ENCODE measurements at regions of chr18 and their contacts with region 1.

Region 1: GRCh38 chr18:2606335-2606734 is 35.0 kb downstream of the NDC80 start:
- DNase-seq: no peak
- ATAC-seq: no peak
- H3K4me3 ChIP-seq: no peak overlapping the region
- H3K27ac ChIP-seq: peak overlapping the region; percentile 46; the same call in 1 of the 2 replicates
- H3K4me1 ChIP-seq: no peaks in the 10 kb centered on the region
- H3K27me3 ChIP-seq: no peaks in the 10 kb centered on the region
- CTCF ChIP-seq: no peak
- EP300 ChIP-seq: no peak
- POLR2A ChIP-seq: no peak
- RAD21 ChIP-seq: no peak

Region 2: DNA sequence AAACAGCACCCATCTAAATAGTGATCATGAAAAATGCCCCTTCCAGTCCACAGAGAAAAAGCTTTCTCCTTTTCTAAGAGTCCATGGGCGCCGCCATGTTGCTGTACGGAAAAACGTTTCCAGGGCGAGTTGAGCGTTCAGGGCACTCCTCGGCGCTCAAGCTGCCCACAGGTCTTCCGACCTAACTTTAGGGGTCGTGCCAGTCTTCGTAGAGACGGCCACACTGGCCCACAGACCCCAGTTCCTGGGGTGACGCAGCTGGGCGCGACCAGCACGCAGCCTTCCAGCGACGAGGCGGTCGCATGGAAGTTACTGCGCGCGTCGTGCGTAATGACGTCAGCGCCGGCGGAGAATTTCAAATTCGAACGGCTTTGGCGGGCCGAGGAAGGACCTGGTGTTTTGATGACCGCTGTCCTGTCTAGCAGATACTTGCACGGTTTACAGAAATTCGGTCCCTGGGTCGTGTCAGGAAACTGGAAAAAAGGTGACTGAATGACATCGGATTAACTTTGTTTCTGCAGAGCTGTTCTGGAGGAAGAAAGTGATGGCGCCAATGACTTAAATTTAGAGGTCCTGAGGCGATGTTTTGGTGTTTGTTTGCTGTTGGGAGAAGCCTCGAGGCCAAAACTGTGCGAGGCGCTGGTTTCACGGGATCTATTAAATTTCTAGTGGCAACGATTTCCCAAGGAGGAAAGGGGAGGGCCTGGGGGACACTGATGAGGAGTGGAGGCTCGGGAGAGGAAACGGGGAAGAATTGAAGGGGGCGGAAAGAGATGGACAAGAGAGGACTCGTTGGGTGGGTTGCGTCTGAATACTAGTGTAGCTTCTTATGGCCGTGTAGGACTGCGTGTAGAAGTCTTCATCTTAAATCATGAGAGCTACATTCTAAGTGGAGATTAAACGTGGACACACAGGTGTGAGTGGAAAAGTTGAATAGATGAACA is 34.9 kb before region 1 on chr18 and contains the starts of genes METTL4 and NDC80:
- CTCF ChIA-PET with region 1: interaction called, 8 read pairs
- POLR2A ChIA-PET with region 1: interaction called, 3 read pairs
- RAD21 ChIA-PET with region 1: interaction called, 21 read pairs
- SMC1A ChIA-PET with region 1: interaction called, 10 read pairs
- in situ Hi-C with region 1: no loop called
- intact Hi-C with region 1: no loop called
- DNase-seq: peak; percentile 71
- ATAC-seq: peak; percentile 82
- H3K4me3 ChIP-seq: peak within 1 kb of the TSS; percentile 82
- H3K27ac ChIP-seq: peak within 1 kb of the TSS; percentile 100
- H3K4me1 ChIP-seq: peaks cover 5% of the 10 kb centered on the region
- H3K27me3 ChIP-seq: no peaks in the 10 kb centered on the region
- CTCF ChIP-seq: 0 out of 6 replicates have a peak, but pooled peaks of 1 of the 3 experiments have one; percentile 12
- EP300 ChIP-seq: no peak
- POLR2A ChIP-seq: peak; percentile 87
- RAD21 ChIP-seq: no peak
- polyA plus RNA-seq, gene METTL4: 7.6 to 13.3 TPM
- polyA plus RNA-seq, gene NDC80: 54.4 to 55.0 TPM

Region 3: DNA sequence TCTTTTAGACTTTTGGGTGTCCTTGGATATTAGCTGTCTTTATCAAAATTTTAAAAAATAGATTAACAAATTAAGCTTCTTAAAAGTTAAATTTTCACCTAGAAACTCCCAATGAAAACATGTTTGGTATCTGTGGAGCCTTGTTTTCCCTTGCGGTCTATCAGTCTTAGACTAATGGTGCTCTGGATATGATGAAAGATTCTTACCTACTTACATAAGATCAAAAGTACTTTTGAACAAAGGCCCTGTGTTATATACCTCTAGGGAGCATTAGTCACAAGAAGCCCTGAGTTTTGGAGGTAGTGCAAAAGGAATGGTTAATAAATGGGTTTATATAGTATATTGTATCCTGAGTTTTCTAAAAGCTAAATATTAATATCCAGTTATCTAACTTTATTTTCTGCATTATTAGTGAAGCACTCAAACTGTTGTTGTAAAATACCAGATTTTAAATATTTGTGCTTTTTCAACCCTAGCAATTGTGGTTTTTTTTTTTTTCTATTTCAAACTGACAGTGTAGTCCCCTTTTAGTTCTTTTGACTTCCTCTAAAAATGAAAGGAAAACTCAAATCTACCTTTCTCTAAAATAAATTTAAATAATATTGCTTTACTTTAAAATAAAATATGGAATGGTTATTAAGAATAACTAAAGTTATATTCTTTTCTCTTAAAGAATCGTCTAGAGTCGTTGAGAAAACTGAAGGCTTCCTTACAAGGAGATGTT is 16.8 kb before region 1 on chr18:
- CTCF ChIA-PET with region 1: no interaction called
- POLR2A ChIA-PET with region 1: interaction called, 3 read pairs
- RAD21 ChIA-PET with region 1: interaction called, 8 read pairs
- SMC1A ChIA-PET with region 1: interaction called, 18 read pairs
- in situ Hi-C with region 1: no loop called
- intact Hi-C with region 1: no loop called
- DNase-seq: no peak
- ATAC-seq: peak; percentile 74
- H3K4me3 ChIP-seq: no peak overlapping the region
- H3K27ac ChIP-seq: peak overlapping the region; percentile 54; the same call in 1 of the 2 replicates
- H3K4me1 ChIP-seq: no peaks in the 10 kb centered on the region
- H3K27me3 ChIP-seq: no peaks in the 10 kb centered on the region
- CTCF ChIP-seq: no peak
- EP300 ChIP-seq: no peak
- POLR2A ChIP-seq: no peak
- RAD21 ChIP-seq: no peak

Region 4: DNA sequence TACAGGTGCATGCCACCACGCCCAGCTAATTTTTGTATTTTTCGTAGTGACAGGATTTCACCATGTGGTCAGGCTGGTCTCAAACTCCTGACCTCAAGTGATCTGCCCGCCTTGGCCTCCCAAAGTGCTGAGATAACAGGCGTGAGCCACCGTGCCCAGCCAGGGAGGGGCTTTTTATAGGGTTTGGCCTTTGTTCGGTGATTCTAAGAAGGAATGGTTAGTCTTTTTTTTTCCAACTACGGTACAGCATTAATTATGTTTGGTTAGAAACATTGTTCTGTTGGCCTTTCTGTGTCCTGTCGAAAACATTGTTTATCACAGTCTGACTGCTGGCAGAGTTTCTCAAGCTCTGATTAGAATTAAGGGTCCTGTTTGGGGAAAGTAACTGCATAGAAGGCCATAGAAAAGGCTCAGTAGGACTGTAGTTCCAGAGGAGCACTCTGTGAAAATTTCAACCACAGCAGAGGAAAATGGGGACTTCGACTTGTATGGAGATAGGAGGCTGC is 29.8 kb after region 1 on chr18:
- CTCF ChIA-PET with region 1: interaction called, 3 read pairs
- POLR2A ChIA-PET with region 1: interaction called, 8 read pairs
- RAD21 ChIA-PET with region 1: interaction called, 30 read pairs
- SMC1A ChIA-PET with region 1: interaction called, 24 read pairs
- in situ Hi-C with region 1: no loop called
- intact Hi-C with region 1: no loop called
- DNase-seq: no peak
- ATAC-seq: peak; percentile 11
- H3K4me3 ChIP-seq: peak overlapping the region; percentile 57; the same call in 1 of the 2 replicates
- H3K27ac ChIP-seq: peak overlapping the region; percentile 99
- H3K4me1 ChIP-seq: peaks cover 40% of the 10 kb centered on the region
- H3K27me3 ChIP-seq: no peaks in the 10 kb centered on the region
- CTCF ChIP-seq: no peak
- EP300 ChIP-seq: no peak
- POLR2A ChIP-seq: no peak
- RAD21 ChIP-seq: no peak

Region 5: DNA sequence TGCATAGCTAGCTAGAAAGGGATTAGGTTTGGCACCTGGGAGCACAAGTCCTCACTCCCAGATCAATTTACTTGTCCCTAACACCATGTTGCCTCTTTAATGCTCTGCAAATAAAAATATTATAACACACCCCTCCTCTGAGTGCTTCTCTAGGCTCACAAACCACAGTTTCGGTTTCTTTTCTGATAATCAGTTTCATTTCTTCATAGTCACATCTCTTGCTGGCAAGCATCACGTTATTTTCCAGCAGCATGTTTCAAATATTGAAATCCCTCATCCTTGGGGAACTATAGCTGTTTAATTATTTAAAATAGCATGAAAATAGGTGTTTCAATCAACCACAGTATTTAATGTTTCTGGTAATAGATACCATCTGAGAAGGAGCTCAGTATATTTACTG is 35.3 kb after region 1 on chr18:
- CTCF ChIA-PET with region 1: interaction called, 3 read pairs
- POLR2A ChIA-PET with region 1: interaction called, 8 read pairs
- RAD21 ChIA-PET with region 1: interaction called, 30 read pairs
- SMC1A ChIA-PET with region 1: interaction called, 24 read pairs
- in situ Hi-C with region 1: no loop called
- intact Hi-C with region 1: no loop called
- DNase-seq: peak; percentile 77
- ATAC-seq: peak; percentile 80
- H3K4me3 ChIP-seq: peak overlapping the region; percentile 33
- H3K27ac ChIP-seq: peak overlapping the region; percentile 99
- H3K4me1 ChIP-seq: peaks cover 49% of the 10 kb centered on the region
- H3K27me3 ChIP-seq: no peaks in the 10 kb centered on the region
- CTCF ChIP-seq: no peak
- EP300 ChIP-seq: peak in 1 of 2 experiments; percentile 57; a peak in 1 of 4 replicates
- POLR2A ChIP-seq: no peak
- RAD21 ChIP-seq: no peak

Measured in GM12878 (cell line).